Activated CD4-positive, alpha-beta T cell treated with anti-CD3 and anti-CD28 coated beads for 36 hours (primary cell): ENCODE measurements at regions of chr17 and their contacts with region 1.

Region 1: GRCh38 chr17:28951991-28952975 is 965 bp upstream of the PHF12 start:
- DNase-seq: peak; percentile 96
- ATAC-seq: peak; percentile 77
- H3K4me3 Mint-ChIP-seq: no peak overlapping the region
- H3K27ac Mint-ChIP-seq: no peak overlapping the region
- H3K4me1 Mint-ChIP-seq: peaks cover 15% of the 10 kb centered on the region
- H3K27me3 Mint-ChIP-seq: no peaks in the 10 kb centered on the region

Region 2: DNA sequence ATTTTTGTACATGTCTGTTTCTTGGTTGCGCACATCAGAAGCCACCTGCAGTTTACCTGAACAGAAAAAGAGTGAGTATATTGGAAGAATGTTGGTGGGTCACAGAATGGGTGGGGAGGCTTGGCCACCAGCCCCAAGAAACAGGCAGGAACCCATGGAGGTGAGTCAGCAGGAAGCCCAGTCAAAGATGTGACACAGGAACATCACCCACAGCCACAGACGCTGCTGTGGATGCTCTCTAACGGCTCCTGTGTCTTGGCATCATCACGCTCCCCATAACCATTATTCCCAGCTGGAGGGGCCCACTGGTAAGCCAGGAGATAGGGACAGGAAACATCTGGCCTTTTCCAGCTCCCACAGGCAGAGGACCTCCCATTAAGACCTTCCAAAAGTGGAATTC is 1752.3 kb before region 1 on chr17:
- CTCF ChIA-PET with region 1: no interaction called
- POLR2A ChIA-PET with region 1: no interaction called
- intact Hi-C with region 1: no loop called
- DNase-seq: no peak
- ATAC-seq: no peak
- H3K4me3 Mint-ChIP-seq: no peak overlapping the region
- H3K27ac Mint-ChIP-seq: no peak overlapping the region
- H3K4me1 Mint-ChIP-seq: no peaks in the 10 kb centered on the region
- H3K27me3 Mint-ChIP-seq: peaks cover 6% of the 10 kb centered on the region

Region 3: GRCh38 chr17:27293898-27294688 is 1658.2 kb before region 1 on chr17 and contains the start of gene WSB1:
- CTCF ChIA-PET with region 1: no interaction called
- POLR2A ChIA-PET with region 1: no interaction called
- intact Hi-C with region 1: loop called in 1 of 2 experiments (anchors 5 kb)
- DNase-seq: peak; percentile 96
- ATAC-seq: peak; percentile 86
- H3K4me3 Mint-ChIP-seq: peak within 1 kb of the TSS; percentile 89
- H3K27ac Mint-ChIP-seq: peak within 1 kb of the TSS; percentile 99
- H3K4me1 Mint-ChIP-seq: peaks cover 32% of the 10 kb centered on the region
- H3K27me3 Mint-ChIP-seq: no peaks in the 10 kb centered on the region
- total RNA-seq, gene WSB1: 145 to 190 TPM

Region 4: GRCh38 chr17:28661635-28662537 is 290.4 kb before region 1 on chr17 and contains the starts of genes SDF2 and SUPT6H:
- CTCF ChIA-PET with region 1: interaction called, 3 read pairs
- POLR2A ChIA-PET with region 1: interaction called, 4 read pairs
- intact Hi-C with region 1: loop called (anchors 1 to 5 kb)
- DNase-seq: peak; percentile 98
- ATAC-seq: peak; percentile 87
- H3K4me3 Mint-ChIP-seq: peak within 1 kb of the TSS; percentile 94
- H3K27ac Mint-ChIP-seq: peak within 1 kb of the TSS; percentile 99
- H3K4me1 Mint-ChIP-seq: peaks cover 48% of the 10 kb centered on the region
- H3K27me3 Mint-ChIP-seq: no peaks in the 10 kb centered on the region
- total RNA-seq, gene SDF2: 36.6 to 37.2 TPM
- total RNA-seq, gene SUPT6H: 80.6 to 85.8 TPM

Region 5: DNA sequence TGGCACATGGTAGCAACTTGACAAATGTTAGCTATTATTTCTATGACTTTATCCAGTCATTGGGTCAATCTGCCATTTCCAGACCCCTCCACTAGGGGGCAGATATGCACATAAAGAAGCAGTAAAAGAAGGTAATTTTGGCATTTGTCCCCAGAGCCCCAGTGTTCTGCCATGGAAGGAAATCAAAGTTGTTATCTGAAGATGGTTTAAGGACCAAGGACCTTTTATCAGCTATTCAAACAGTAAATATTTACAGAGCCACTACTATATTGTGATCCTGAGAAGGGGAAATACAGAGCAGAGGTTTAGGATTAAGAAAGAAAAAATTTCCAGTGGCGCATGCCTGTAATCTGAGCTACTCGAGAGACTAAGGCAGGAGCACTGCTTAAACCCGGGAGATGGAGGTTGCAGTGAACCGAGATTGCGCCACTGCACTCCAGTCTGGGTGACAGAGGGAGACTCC is 188.4 kb before region 1 on chr17:
- CTCF ChIA-PET with region 1: interaction called, 11 read pairs
- POLR2A ChIA-PET with region 1: no interaction called
- intact Hi-C with region 1: no loop called
- DNase-seq: peak; percentile 87
- ATAC-seq: peak; percentile 63
- H3K4me3 Mint-ChIP-seq: no peak overlapping the region
- H3K27ac Mint-ChIP-seq: peak overlapping the region; percentile 80
- H3K4me1 Mint-ChIP-seq: peaks cover 25% of the 10 kb centered on the region
- H3K27me3 Mint-ChIP-seq: no peaks in the 10 kb centered on the region

Region 6: DNA sequence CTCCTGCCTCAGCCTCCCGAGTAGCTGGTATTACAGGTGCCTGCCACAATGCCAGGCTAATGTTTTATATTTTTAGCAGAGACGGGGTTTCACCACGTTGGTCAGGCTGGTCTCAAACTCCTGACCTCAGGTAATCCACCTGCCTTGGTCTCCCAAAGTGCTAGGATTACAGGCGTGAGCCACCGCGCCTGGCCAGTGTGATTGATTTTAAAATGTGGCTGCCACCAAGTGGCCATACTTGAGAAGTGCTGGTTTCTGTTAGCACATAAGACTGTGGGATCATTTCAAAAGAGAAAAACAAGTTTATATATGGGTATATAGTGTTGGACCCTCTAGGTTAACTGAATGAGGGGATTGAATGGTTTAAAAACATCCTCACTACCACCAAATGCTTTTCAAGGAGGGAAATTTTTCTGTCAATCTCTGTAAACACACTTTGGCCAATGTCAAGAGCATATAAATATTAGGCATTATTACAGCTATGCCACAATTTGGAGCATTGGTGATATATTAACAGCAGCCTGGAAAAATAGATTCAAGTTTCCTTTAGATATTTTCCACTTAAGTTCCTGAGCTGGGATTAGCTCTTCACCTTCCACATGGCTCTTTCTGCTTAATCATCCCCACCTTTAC is 35.9 kb before region 1 on chr17:
- CTCF ChIA-PET with region 1: interaction called, 11 read pairs
- POLR2A ChIA-PET with region 1: no interaction called
- intact Hi-C with region 1: no loop called
- DNase-seq: peak; percentile 66
- ATAC-seq: peak; percentile 70
- H3K4me3 Mint-ChIP-seq: no peak overlapping the region
- H3K27ac Mint-ChIP-seq: no peak overlapping the region
- H3K4me1 Mint-ChIP-seq: peaks cover 14% of the 10 kb centered on the region
- H3K27me3 Mint-ChIP-seq: no peaks in the 10 kb centered on the region

Region 7: DNA sequence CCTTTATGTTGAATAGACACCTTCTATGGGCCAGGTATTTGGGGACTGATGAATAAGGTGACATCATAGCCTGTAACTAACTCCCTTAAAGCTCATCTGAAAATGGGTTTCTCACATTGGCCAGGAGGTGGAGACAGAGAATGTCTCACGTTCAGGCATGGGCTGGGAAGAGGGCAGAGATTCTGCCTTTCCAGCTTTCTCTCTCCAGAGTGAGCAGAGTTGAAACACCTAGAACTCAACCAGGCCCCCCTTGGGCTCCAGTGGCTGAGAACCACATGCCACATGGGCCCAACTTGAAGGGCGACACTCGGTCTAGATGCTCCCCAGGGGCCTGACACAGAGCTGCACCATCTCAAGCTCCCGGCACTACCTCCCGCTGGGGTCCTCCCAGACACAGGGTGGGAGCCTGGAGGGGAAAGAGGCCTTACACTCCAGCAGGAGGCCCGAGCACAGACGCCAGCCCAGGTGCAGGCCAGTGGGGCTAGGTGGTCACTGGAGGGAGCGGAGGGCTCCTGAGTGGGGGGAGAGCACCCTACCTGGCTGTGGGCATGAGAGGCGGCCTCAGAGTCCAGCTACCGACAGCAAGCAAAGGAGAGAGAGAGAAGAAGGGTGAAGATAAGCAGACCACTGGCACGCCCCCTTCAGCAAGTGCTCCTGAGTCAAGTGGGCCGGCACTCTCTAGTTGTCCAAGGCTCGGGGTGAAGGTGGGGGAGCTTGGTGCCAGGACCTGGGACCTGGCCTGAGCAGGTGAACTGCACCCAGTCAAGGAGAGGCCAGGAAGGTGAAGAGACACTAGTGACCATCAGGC is 172.0 kb after region 1 on chr17:
- CTCF ChIA-PET with region 1: interaction called, 10 read pairs
- POLR2A ChIA-PET with region 1: no interaction called
- intact Hi-C with region 1: no loop called
- DNase-seq: peak; percentile 61
- ATAC-seq: peak; percentile 98
- H3K4me3 Mint-ChIP-seq: no peak overlapping the region
- H3K27ac Mint-ChIP-seq: no peak overlapping the region
- H3K4me1 Mint-ChIP-seq: peaks cover 3% of the 10 kb centered on the region
- H3K27me3 Mint-ChIP-seq: no peaks in the 10 kb centered on the region